CD4-positive, alpha-beta T cell (primary cell): ENCODE measurements at regions of chr2 and their contacts with region 1.

Region 1: GRCh38 chr2:120174963-120175581 is 48.1 kb downstream of the TMEM185B start:
- DNase-seq: peak in 4 of 14 experiments; percentile 26 to 79 (median 74)
- ATAC-seq: no peak
- H3K4me3 ChIP-seq: no peak overlapping the region
- H3K4me3 Mint-ChIP-seq: peak overlapping the region; percentile 50
- H3K27ac ChIP-seq: no peak overlapping the region
- H3K27ac Mint-ChIP-seq: peak overlapping the region; percentile 95
- H3K4me1 ChIP-seq: peaks cover 34% of the 10 kb centered on the region
- H3K4me1 Mint-ChIP-seq: peaks cover 52% of the 10 kb centered on the region
- H3K27me3 ChIP-seq: no peaks in the 10 kb centered on the region
- H3K27me3 Mint-ChIP-seq: no peaks in the 10 kb centered on the region
- CTCF ChIP-seq: peak; percentile 88

Region 2: GRCh38 chr2:119678998-119679710 is 495.9 kb before region 1 on chr2 and contains the start of gene TMEM177:
- CTCF ChIA-PET with region 1: no interaction called
- POLR2A ChIA-PET with region 1: interaction called, 22 read pairs
- intact Hi-C with region 1: no loop called
- DNase-seq: peak; percentile 74 to 94 (median 87)
- ATAC-seq: peak; percentile 81
- H3K4me3 ChIP-seq: peak within 1 kb of the TSS; percentile 97
- H3K4me3 Mint-ChIP-seq: peak within 1 kb of the TSS; percentile 82
- H3K27ac ChIP-seq: peak within 1 kb of the TSS; percentile 56 to 67
- H3K27ac Mint-ChIP-seq: peak within 1 kb of the TSS; percentile 91
- H3K4me1 ChIP-seq: peaks cover 27% of the 10 kb centered on the region
- H3K4me1 Mint-ChIP-seq: peaks cover 46% of the 10 kb centered on the region
- H3K27me3 ChIP-seq: no peaks in the 10 kb centered on the region
- H3K27me3 Mint-ChIP-seq: no peaks in the 10 kb centered on the region
- CTCF ChIP-seq: no peak
- total RNA-seq, gene TMEM177: 3.6 to 4.0 TPM

Region 3: GRCh38 chr2:119753041-119753929 is 421.8 kb before region 1 on chr2:
- CTCF ChIA-PET with region 1: interaction called, 4 read pairs
- POLR2A ChIA-PET with region 1: interaction called, 7 read pairs
- intact Hi-C with region 1: loop called (anchors 1 to 2 kb)
- DNase-seq: peak in 8 of 14 experiments; percentile 9 to 75 (median 40)
- ATAC-seq: peak; percentile 86
- H3K4me3 ChIP-seq: no peak overlapping the region
- H3K4me3 Mint-ChIP-seq: no peak overlapping the region
- H3K27ac ChIP-seq: no peak overlapping the region
- H3K27ac Mint-ChIP-seq: no peak overlapping the region
- H3K4me1 ChIP-seq: no peaks in the 10 kb centered on the region
- H3K4me1 Mint-ChIP-seq: peaks cover 4% of the 10 kb centered on the region
- H3K27me3 ChIP-seq: no peaks in the 10 kb centered on the region
- H3K27me3 Mint-ChIP-seq: no peaks in the 10 kb centered on the region
- CTCF ChIP-seq: peak; percentile 91

Region 4: DNA sequence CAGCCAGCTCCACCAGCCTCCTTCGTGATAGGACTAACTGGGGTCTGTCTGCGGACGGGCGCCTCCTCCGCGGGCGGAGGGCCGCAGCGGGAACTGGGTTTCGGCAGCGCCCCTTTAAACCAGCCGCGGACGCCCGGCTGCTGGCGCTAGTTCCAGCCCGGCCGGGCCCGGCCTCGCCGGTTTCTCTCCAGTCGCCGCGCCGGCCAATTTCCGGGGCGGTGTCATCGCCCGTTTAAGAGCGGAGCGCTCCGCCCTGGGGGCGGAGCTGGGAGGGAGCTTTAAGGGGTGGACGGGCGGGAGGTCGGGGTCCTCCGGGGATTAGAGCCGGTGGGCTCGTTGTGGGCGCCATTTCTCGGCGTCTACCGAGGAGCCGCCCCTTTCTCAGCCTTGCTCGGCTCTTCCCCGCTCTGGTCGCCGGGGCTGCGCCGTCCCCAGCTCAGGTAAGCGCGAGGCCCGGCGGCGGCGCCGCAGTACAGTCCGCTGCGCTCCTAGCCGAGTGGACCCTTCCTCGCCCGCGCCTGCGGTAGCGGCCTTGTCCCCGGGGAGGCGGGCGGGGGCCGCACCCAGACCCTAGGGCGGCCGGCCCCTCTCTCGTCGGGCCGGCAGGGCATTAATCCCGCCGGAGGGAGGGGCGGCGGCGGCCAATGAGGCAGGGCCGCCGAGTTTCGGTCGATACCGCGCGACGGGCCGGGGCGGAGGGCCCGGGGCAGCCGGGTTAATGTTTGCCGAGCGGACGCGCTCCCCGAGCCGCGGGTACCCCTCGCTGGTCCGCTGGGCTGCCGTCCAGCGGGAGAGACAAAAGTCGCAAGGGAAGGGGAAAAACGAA is 162.1 kb before region 1 on chr2 and contains the start of gene EPB41L5:
- CTCF ChIA-PET with region 1: no interaction called
- POLR2A ChIA-PET with region 1: interaction called, 14 read pairs
- intact Hi-C with region 1: loop called in 1 of 2 experiments (anchors 5 kb)
- DNase-seq: peak; percentile 50 to 89 (median 73)
- ATAC-seq: peak; percentile 89
- H3K4me3 ChIP-seq: peak within 1 kb of the TSS; percentile 70
- H3K4me3 Mint-ChIP-seq: peak within 1 kb of the TSS; percentile 87
- H3K27ac ChIP-seq: peak within 1 kb of the TSS in 1 of 2 donors; percentile 21
- H3K27ac Mint-ChIP-seq: peak within 1 kb of the TSS; percentile 62
- H3K4me1 ChIP-seq: peaks cover 7% of the 10 kb centered on the region
- H3K4me1 Mint-ChIP-seq: peaks cover 21% of the 10 kb centered on the region
- H3K27me3 ChIP-seq: no peaks in the 10 kb centered on the region
- H3K27me3 Mint-ChIP-seq: no peaks in the 10 kb centered on the region
- CTCF ChIP-seq: no peak
- total RNA-seq, gene EPB41L5: 4.6 to 5.1 TPM

Region 5: GRCh38 chr2:120231974-120232635 is 57.0 kb after region 1 on chr2:
- CTCF ChIA-PET with region 1: interaction called, 10 read pairs
- POLR2A ChIA-PET with region 1: interaction called, 32 read pairs
- intact Hi-C with region 1: loop called in 1 of 2 experiments (anchors 5 kb)
- DNase-seq: peak; percentile 32 to 91 (median 54)
- ATAC-seq: peak; percentile 90
- H3K4me3 ChIP-seq: peak overlapping the region; percentile 70
- H3K4me3 Mint-ChIP-seq: peak overlapping the region; percentile 95
- H3K27ac ChIP-seq: peak overlapping the region; percentile 66 to 80
- H3K27ac Mint-ChIP-seq: peak overlapping the region; percentile 95
- H3K4me1 ChIP-seq: peaks cover 45% of the 10 kb centered on the region
- H3K4me1 Mint-ChIP-seq: peaks cover 62% of the 10 kb centered on the region
- H3K27me3 ChIP-seq: no peaks in the 10 kb centered on the region
- H3K27me3 Mint-ChIP-seq: no peaks in the 10 kb centered on the region
- CTCF ChIP-seq: no peak